ENCODE measurements at regions of chr2 and their contacts with region 1.

Region 1: GRCh38 chr2:158034199-158034866 is 67.3 kb upstream of the UPP2 start:
- H3K4me3 ChIP-seq: no peak overlapping the region
- H3K27ac ChIP-seq: no peak overlapping the region
- H3K4me1 ChIP-seq: no peaks in the 10 kb centered on the region
- CTCF ChIP-seq: peak; percentile 48; the same call in 1 of the 2 replicates

Region 2: DNA sequence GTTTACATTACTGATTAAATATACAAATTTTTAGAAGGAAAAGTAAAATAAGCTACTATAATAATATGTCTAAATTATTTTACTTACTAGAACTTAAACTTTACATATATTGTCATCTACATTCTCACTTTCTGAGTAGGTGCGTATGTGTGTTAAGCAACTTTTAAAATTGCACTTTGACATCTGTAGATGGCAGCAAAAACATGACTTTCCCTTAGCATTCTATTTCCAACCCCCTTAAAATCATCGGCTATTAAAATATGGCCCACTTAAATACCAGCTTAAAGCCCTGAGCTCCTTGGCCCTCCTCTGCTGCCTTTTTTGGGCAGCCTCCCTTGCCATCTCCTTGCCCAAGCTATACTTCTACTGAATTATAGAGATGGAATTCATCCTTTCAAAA is 145.3 kb after region 1 on chr2:
- CTCF ChIA-PET with region 1: interaction called, 10 read pairs
- POLR2A ChIA-PET with region 1: no interaction called
- H3K4me3 ChIP-seq: no peak overlapping the region
- H3K27ac ChIP-seq: no peak overlapping the region
- H3K4me1 ChIP-seq: no peaks in the 10 kb centered on the region
- CTCF ChIP-seq: peak; percentile 26; the same call in 1 of the 2 replicates

Region 3: DNA sequence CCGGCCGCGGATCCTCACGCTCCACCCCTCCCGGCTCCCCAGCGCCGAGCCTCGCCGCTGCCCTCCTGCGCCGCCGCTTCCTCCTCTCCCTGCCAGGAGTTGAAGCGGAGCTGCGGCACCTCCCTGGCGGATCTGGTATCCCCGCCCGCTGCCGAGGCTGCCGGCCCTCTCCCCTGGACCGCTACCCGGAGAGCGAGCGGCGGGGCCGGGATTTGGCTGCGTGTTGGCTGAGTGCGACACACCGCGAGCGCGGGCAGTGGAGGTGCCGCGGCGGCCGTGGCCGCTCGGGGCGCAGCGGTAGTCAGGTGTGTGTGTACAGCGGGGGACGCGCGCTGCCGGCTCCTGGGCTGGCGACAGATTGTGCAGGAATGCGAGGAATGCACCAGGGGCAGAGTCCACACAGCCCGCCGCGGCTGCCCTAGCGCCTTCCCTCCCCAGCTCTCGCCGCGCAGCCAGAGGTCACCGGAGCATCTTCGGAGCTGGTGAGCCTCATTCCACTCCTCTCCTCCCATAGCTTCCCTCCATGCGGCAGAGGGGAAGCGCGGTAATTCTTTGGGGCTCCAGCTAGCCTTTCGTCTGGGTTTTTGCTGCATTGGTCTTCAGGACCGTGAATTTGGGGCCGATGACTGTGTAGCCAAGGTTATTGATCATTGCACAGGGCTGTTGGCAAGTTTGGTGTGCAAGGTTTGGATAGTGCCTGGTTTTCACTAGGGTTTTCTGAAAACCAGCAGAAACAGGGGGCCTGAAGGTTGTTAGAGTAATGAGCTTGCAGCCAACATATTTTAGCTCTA is 423.7 kb after region 1 on chr2:
- CTCF ChIA-PET with region 1: interaction called, 11 read pairs
- POLR2A ChIA-PET with region 1: no interaction called
- H3K4me3 ChIP-seq: peak overlapping the region; percentile 96
- H3K27ac ChIP-seq: peak overlapping the region; percentile 89
- H3K4me1 ChIP-seq: peaks cover 6% of the 10 kb centered on the region
- CTCF ChIP-seq: peak; percentile 91

Measured in HEK293 (cell line).